ENCODE measurements at regions of chr5 and their contacts with region 1.

Region 1: DNA sequence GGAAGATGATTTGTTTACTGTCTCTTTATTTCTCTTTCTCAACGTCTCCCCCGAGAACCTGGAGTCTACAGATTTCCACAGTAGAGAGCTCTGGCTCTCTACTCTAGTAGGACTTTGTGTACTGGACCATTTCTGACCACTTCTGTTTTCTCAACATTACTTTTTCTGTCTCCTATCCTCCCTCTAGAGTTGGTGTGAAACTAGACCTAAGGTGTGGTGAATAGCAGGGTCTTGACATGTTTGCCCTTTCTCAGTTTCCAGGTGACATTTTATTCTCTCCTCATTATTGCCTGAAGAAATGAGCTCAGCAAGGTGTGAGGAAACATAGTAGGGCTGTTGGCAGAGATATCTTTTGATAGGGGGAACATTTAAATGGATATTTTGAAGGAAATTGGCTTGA is 62.1 kb upstream of the IL6ST start:
- DNase-seq: no peak
- ATAC-seq: no peak
- H3K4me3 Mint-ChIP-seq: peak overlapping the region; percentile 25
- H3K27ac Mint-ChIP-seq: peak overlapping the region; percentile 66
- H3K4me1 Mint-ChIP-seq: peaks cover 73% of the 10 kb centered on the region
- H3K27me3 Mint-ChIP-seq: peaks cover 3% of the 10 kb centered on the region

Region 2: GRCh38 chr5:55829956-55830355 is 226.9 kb before region 1 on chr5:
- CTCF ChIA-PET with region 1: no interaction called
- POLR2A ChIA-PET with region 1: no interaction called
- intact Hi-C with region 1: no loop called
- DNase-seq: no peak
- ATAC-seq: peak; percentile 53
- H3K4me3 Mint-ChIP-seq: no peak overlapping the region
- H3K27ac Mint-ChIP-seq: no peak overlapping the region
- H3K4me1 Mint-ChIP-seq: no peaks in the 10 kb centered on the region
- H3K27me3 Mint-ChIP-seq: peaks cover 8% of the 10 kb centered on the region

Region 3: DNA sequence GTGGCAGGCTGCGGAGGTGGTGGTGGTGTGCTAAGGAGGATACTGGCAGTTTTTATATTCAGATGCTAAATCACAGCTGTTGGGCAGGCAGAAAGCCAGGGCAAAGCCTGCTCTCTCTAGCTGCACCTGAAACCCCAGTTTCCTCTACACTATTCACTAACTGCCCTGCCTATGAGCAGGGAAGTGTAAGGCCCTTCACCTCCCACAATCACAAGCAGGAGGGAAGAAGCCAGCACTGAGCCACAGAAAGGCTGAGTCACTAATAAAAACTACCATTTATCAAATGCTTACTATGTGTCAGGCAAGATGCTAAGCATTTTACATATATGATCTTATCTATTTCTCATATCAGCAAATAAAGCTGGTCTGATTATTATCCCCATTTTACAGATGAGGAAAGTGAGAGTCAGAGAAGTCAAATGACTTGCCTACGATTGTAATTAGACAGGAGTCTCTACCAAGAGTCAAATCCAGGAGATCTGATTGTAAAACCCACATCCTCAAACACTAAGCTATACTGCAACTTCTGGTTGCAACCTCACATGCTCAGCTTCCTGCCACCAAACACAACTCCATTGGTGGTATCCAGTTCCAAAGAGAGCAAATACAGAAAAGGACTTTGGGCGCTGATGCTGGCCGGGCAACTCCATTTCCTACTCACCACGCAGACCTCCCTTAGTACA is 44.5 kb before region 1 on chr5:
- CTCF ChIA-PET with region 1: interaction called, 3 read pairs
- POLR2A ChIA-PET with region 1: interaction called, 5 read pairs
- intact Hi-C with region 1: loop called (anchors 5 kb)
- DNase-seq: peak; percentile 57
- ATAC-seq: peak; percentile 74
- H3K4me3 Mint-ChIP-seq: peak overlapping the region; percentile 3
- H3K27ac Mint-ChIP-seq: peak overlapping the region; percentile 61
- H3K4me1 Mint-ChIP-seq: peaks cover 48% of the 10 kb centered on the region
- H3K27me3 Mint-ChIP-seq: no peaks in the 10 kb centered on the region

Region 4: DNA sequence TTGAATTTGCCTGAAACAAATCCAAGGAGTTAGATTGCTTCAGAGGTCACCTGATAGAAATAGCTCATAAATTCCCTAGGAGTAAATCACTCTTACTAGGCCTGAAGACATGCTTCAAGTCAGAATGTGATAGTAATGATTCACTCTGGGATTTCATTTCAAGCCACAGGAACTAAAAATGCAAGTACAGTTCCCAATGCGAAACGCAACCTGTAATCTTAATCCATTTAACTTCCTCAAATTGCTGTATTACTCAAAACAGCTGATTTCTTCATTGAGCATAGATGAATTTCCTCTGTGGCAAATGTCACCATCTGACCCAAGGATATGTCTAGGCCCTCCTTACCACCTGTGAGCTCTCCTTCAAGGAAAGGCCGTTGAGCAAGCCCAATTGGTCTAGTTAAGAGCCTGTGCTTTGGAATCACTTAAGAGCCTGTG is 30.0 kb before region 1 on chr5:
- CTCF ChIA-PET with region 1: interaction called, 3 read pairs
- POLR2A ChIA-PET with region 1: interaction called, 11 read pairs
- intact Hi-C with region 1: loop called in 1 of 2 experiments (anchors 2 kb)
- DNase-seq: no peak
- ATAC-seq: peak; percentile 92
- H3K4me3 Mint-ChIP-seq: no peak overlapping the region
- H3K27ac Mint-ChIP-seq: no peak overlapping the region
- H3K4me1 Mint-ChIP-seq: peaks cover 16% of the 10 kb centered on the region
- H3K27me3 Mint-ChIP-seq: no peaks in the 10 kb centered on the region

Region 5: DNA sequence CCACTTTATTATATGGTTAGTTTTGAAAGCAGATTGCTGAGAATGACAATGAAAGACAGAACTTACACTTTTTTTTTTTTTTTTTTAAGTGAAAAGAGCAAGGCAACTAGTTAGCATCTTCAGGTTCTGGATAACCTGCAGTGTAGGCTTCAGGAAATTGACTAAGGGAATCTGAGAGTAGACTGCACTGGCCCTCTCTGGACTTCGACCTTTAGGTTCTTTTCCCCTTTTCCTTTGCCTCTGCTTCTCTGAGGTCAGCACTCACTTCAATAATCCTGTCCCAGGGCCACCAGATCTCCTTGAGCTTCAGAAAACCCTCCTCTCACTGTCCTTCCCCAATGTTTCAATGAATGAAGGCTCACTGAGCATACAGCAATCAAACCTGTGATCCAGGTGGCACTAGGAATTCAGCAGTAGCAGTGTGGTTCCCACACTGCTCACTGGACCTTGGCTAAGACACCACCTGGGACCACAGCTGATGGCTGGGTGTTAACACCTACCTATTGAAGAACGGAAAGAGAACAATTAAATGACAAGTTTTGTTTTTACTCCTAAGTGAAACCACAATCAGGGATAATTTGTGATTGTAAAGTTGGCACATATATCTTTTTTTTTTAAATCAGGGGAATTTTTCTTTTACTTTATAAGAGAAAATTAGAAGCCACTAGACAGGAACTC is 23.6 kb after region 1 on chr5:
- CTCF ChIA-PET with region 1: interaction called, 3 read pairs
- POLR2A ChIA-PET with region 1: interaction called, 3 read pairs
- intact Hi-C with region 1: loop called in 1 of 2 experiments (anchors 2 kb)
- DNase-seq: peak; percentile 46
- ATAC-seq: peak; percentile 71
- H3K4me3 Mint-ChIP-seq: peak overlapping the region; percentile 43
- H3K27ac Mint-ChIP-seq: peak overlapping the region; percentile 92
- H3K4me1 Mint-ChIP-seq: peaks cover 54% of the 10 kb centered on the region
- H3K27me3 Mint-ChIP-seq: no peaks in the 10 kb centered on the region

Region 6: GRCh38 chr5:56095579-56096102 is 38.8 kb after region 1 on chr5:
- CTCF ChIA-PET with region 1: interaction called, 3 read pairs
- POLR2A ChIA-PET with region 1: interaction called, 4 read pairs
- intact Hi-C with region 1: loop called in 1 of 2 experiments (anchors 5 kb)
- DNase-seq: no peak
- ATAC-seq: no peak
- H3K4me3 Mint-ChIP-seq: peak overlapping the region; percentile 36
- H3K27ac Mint-ChIP-seq: peak overlapping the region; percentile 84
- H3K4me1 Mint-ChIP-seq: peaks cover 89% of the 10 kb centered on the region
- H3K27me3 Mint-ChIP-seq: no peaks in the 10 kb centered on the region